ENCODE measurements at regions of chr4 and their contacts with region 1.

Region 1: DNA sequence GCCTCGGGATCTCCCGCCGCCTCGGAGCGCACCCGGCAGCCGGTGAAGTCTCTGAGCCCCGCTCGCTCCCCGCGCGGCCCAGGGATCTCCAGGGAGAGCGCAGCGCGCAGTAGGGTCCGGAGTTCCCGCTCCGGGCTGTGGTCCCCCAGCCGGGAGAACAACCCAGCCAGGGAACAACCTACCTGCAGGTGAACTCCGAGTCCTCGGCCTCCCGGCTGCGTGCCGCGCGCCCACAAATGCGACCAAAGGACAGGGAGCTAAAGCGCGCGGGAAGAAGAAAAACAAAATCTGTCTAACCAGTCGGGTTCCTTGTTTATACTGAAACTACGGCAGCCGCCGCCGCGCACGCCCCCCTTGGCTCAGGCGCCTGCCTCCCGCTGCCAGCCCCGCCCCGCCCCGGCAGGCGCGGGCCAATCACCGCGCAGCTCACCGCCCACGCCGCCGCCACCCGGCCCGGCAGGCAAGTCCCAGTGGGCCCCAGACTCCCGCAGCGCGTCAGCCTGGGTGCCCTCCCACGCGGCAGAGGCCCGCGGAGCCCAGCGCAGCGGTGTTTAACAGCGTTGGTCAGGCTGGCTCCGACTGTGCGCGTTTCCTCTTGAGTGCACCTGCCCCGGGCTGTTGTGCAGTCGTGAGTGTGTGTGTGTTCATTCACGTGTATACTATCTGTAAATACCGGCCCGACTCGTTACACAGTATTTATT is at the start of gene RASGEF1B:
- DNase-seq: peak; percentile 67
- ATAC-seq: peak; percentile 75
- H3K4me3 Mint-ChIP-seq: peak within 1 kb of the TSS; percentile 78
- H3K27ac Mint-ChIP-seq: peak within 1 kb of the TSS; percentile 76
- H3K4me1 Mint-ChIP-seq: peaks cover 38% of the 10 kb centered on the region
- H3K27me3 Mint-ChIP-seq: peaks cover 18% of the 10 kb centered on the region
- CTCF ChIP-seq: no peak
- total RNA-seq, gene RASGEF1B: 3.8 to 6.9 TPM (median 4.0 TPM) in 3 replicates

Region 2: DNA sequence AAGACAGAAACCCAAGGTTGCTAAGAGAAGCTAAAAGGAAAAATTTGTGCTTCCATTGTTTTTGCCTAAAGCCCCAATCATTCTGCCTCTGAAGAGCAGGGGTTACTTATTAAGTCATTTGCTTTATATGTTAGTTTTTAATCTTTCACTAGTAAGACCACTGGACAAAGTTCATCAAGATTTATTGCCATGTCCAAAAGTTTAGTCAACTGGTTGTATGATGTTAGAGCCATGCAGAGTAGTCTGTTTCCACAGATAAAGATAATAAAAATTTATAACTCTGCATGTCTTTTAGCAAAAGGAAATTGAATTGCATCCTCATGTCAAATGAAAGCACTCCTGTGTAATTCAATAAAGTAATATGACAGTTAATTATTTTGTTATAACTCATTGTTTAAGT is 180.9 kb before region 1 on chr4:
- CTCF ChIA-PET with region 1: no interaction called
- POLR2A ChIA-PET with region 1: no interaction called
- DNase-seq: no peak
- ATAC-seq: no peak
- H3K4me3 Mint-ChIP-seq: no peak overlapping the region
- H3K27ac Mint-ChIP-seq: no peak overlapping the region
- H3K4me1 Mint-ChIP-seq: no peaks in the 10 kb centered on the region
- H3K27me3 Mint-ChIP-seq: no peaks in the 10 kb centered on the region; the same call in 1 of the 2 replicates
- CTCF ChIP-seq: no peak

Region 3: GRCh38 chr4:81405894-81406401 is 65.8 kb before region 1 on chr4:
- CTCF ChIA-PET with region 1: interaction called, 14 read pairs
- POLR2A ChIA-PET with region 1: no interaction called
- DNase-seq: no peak
- ATAC-seq: peak; percentile 38
- H3K4me3 Mint-ChIP-seq: no peak overlapping the region
- H3K27ac Mint-ChIP-seq: no peak overlapping the region
- H3K4me1 Mint-ChIP-seq: peaks cover 11% of the 10 kb centered on the region
- H3K27me3 Mint-ChIP-seq: no peaks in the 10 kb centered on the region
- CTCF ChIP-seq: peak; percentile 58

Region 4: GRCh38 chr4:81454499-81454898 is 17.2 kb before region 1 on chr4:
- CTCF ChIA-PET with region 1: interaction called, 11 read pairs
- POLR2A ChIA-PET with region 1: no interaction called
- DNase-seq: no peak
- ATAC-seq: no peak
- H3K4me3 Mint-ChIP-seq: no peak overlapping the region
- H3K27ac Mint-ChIP-seq: no peak overlapping the region
- H3K4me1 Mint-ChIP-seq: peaks cover 42% of the 10 kb centered on the region
- H3K27me3 Mint-ChIP-seq: no peaks in the 10 kb centered on the region; the same call in 1 of the 2 replicates
- CTCF ChIP-seq: no peak

Region 5: GRCh38 chr4:81688085-81688484 is 216.3 kb after region 1 on chr4:
- CTCF ChIA-PET with region 1: interaction called, 47 read pairs
- POLR2A ChIA-PET with region 1: no interaction called
- DNase-seq: no peak
- ATAC-seq: peak; percentile 80
- H3K4me3 Mint-ChIP-seq: no peak overlapping the region
- H3K27ac Mint-ChIP-seq: no peak overlapping the region
- H3K4me1 Mint-ChIP-seq: peaks cover 13% of the 10 kb centered on the region
- H3K27me3 Mint-ChIP-seq: no peaks in the 10 kb centered on the region
- CTCF ChIP-seq: no peak

Region 6: DNA sequence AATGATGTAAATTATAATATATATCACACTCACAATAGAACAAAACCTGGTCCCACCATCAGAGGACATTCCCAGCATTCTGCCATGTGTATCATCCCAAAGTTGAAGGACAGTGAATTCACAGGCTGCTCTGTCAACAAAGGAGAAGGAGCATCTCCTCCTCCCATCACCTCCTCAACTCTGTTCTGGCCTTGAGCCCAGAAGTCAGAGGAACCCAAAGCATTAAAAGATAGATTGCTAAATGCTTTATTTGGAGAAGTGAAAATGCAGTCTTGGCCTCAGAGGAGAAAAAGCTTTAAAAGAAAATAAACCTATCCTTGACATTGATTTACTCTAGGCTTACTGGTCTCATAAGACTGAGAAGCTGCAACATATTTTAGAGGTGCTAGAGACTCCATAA is 268.7 kb after region 1 on chr4:
- CTCF ChIA-PET with region 1: no interaction called
- POLR2A ChIA-PET with region 1: no interaction called
- DNase-seq: no peak
- ATAC-seq: no peak
- H3K4me3 Mint-ChIP-seq: no peak overlapping the region
- H3K27ac Mint-ChIP-seq: no peak overlapping the region
- H3K4me1 Mint-ChIP-seq: peaks cover 18% of the 10 kb centered on the region
- H3K27me3 Mint-ChIP-seq: no peaks in the 10 kb centered on the region
- CTCF ChIP-seq: no peak

Region 7: DNA sequence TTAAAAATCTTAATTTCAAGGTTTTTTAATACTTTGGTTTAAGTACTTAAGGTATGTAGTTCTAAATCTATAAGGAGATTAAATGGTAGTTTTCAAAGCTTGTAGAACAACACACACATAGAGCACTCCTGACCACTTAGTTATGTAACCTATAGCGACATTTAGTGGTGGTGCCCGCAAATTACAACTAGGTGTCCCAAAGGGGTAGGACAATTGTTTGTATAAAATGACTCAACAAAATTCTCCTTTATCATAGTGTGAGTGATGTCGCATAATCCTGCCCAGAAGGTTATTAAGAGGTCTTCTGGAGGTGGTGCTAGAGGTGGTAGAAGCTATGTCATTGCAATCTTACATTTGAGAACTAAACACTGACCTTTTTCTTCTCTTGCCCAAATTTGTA is 373.0 kb after region 1 on chr4:
- CTCF ChIA-PET with region 1: interaction called, 28 read pairs
- POLR2A ChIA-PET with region 1: no interaction called
- DNase-seq: peak; percentile 79
- ATAC-seq: peak; percentile 94
- H3K4me3 Mint-ChIP-seq: no peak overlapping the region
- H3K27ac Mint-ChIP-seq: no peak overlapping the region
- H3K4me1 Mint-ChIP-seq: peaks cover 8% of the 10 kb centered on the region; the same call in 1 of the 2 replicates
- H3K27me3 Mint-ChIP-seq: no peaks in the 10 kb centered on the region
- CTCF ChIP-seq: peak; percentile 64

Region 8: DNA sequence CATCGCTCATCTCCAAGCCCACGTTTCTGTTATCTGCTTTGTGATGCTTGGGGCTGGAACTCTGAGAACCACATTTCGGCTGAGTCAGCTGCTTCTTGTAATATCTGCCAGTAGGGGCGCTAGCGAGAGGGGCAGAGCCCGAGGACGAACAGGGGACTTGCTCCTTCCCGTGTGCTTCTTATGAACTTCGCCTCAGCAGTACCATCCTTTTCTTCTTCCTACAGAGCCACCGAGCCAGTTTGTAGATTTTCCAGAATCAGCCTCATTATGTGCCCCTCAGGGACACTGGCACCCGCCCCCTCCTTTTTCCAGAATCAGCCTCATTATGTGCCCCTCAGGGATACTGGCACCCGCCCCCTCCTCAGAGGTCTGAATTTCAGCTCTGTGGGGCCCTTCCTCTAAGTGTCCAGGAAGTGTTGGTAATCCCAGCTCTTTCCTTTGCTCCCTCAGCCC is 441.7 kb after region 1 on chr4:
- CTCF ChIA-PET with region 1: interaction called, 12 read pairs
- POLR2A ChIA-PET with region 1: no interaction called
- DNase-seq: peak; percentile 79
- ATAC-seq: peak; percentile 96
- H3K4me3 Mint-ChIP-seq: peak overlapping the region; percentile 54
- H3K27ac Mint-ChIP-seq: no peak overlapping the region; the same call in 1 of the 2 replicates
- H3K4me1 Mint-ChIP-seq: peaks cover 9% of the 10 kb centered on the region
- H3K27me3 Mint-ChIP-seq: no peaks in the 10 kb centered on the region
- CTCF ChIP-seq: peak; percentile 85